Uterus (tissue), 4 donors: ENCODE measurements at regions of chr18 and their contacts with region 1.

Region 1: DNA sequence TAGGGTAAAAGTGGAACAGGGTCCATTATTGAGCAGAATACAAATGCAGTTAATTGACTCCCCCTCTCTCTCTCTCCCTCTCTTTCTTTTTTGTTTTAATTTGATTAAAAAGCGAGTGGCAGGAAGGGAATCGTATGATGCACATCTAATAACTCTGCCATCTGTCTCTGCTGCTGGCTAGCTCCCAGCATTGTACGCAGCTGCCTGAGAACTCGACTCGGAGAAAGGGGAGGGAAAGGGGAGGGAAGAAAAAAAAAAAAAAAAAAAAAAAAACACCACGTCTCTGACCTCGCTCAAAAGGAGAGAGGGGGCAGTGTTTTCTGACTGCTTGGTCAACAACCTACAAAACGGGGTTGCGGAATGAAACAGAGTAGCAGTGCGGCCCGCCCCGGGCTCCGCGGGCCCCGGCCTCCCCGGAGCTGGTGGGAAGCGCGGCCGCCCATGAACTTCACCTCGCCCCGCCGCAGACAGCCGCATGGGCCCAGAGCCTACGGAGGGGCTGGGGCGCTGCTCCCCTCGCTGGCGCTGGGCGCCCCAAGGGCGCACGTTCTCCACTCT is 265.7 kb downstream of the TCF4 start:
- DNase-seq: peak; percentile 83 to 93
- H3K4me3 ChIP-seq: peak overlapping the region; percentile 52 to 72
- H3K27ac ChIP-seq: peak overlapping the region; percentile 97 to 99
- H3K4me1 ChIP-seq: peaks cover 0 to 13% of the 10 kb centered on the region in 2 donors
- H3K27me3 ChIP-seq: no peaks in the 10 kb centered on the region
- CTCF ChIP-seq: peak in 2 of 4 experiments; percentile 14 to 20
- POLR2A ChIP-seq: peak; percentile 69

Region 2: DNA sequence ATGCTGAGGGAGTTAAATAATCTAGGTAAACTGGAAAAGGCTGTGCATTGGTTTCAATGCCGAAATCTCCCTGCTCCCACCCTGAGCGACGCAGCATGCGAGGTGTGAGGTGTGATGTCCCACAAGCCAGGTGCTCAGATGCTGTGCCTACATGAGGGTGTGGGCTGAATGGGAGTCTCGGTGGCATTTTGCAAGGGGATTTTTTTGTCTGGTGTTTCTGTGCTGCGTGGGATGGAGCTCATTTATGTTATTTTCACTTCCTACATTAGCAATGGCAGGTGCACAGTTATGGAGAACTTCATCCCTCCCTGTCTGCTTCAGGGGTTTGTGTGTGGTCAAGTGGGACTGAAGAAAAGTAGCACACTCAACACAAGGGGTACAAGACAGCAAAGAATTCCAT is 252.8 kb before region 1 on chr18:
- intact Hi-C with region 1: no loop called
- DNase-seq: no peak
- H3K4me3 ChIP-seq: no peak overlapping the region
- H3K27ac ChIP-seq: no peak overlapping the region
- H3K4me1 ChIP-seq: no peaks in the 10 kb centered on the region
- H3K27me3 ChIP-seq: no peaks in the 10 kb centered on the region
- CTCF ChIP-seq: no peak
- POLR2A ChIP-seq: no peak

Region 3: DNA sequence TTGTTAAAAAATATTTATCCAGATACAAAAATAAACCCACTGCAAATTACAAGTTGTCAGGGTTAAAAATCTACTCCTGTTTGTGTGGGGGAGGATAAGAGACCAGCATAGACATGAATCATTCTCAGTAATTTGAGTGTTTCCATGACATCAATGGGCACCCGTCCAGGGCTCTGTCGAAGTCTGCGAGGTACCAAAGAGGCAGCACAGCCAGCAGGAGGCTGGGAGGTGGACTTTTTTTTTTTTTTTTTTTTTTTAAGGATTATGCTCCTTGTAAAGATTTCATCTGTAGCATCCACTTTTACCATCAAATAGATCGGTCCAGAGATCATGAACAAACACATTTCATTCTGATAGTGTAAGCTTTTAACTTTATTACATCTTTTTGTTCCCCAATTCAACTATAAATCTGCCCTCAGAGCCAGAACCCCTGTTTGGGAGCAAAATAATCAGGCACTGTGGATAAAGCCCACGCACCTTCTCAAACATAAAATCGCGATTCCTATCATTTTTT is 83.7 kb after region 1 on chr18:
- intact Hi-C with region 1: loop called (anchors 10 kb)
- DNase-seq: peak; percentile 84 to 89
- H3K4me3 ChIP-seq: peak overlapping the region in 1 of 2 donors; percentile 0
- H3K27ac ChIP-seq: peak overlapping the region; percentile 74 to 75
- H3K4me1 ChIP-seq: no peaks in the 10 kb centered on the region
- H3K27me3 ChIP-seq: peaks cover 0 to 3% of the 10 kb centered on the region in 2 donors
- CTCF ChIP-seq: no peak
- POLR2A ChIP-seq: no peak

Region 4: DNA sequence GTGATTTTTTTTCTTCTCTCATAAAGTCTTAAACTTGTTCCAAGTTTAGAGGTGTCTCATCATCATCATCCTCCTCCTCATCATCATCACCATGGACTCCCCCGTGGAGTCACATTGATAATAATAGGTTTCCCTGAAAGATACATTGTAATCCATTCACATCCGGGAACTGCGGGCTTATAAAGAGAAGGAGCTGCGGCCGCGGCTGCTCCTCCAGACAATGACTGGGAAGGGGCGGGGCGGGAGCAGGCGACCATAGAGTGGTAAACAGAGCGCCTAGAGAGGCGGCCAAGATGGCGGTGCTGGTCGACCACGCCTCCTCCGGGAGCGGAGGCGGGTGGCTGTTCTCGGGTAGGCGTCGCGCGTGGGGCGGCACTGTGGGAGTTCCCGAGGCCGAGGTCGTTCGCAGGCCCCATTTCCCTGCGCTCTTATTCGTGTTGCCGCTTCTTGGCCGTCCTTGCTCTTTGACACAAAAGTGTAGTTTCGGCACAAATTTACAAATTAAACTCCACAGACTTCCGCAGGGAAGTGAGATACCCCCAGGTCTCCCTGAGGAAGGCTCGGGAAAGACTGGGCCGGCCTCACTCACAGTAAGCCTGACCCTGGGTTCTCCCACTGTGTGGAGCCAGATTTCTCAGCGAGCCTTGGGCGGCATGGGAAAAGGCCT is 267.5 kb after region 1 on chr18:
- intact Hi-C with region 1: loop called (anchors 5 kb)
- DNase-seq: peak; percentile 97 to 98
- H3K4me3 ChIP-seq: peak overlapping the region; percentile 74 to 79
- H3K27ac ChIP-seq: peak overlapping the region; percentile 88 to 99
- H3K4me1 ChIP-seq: no peaks in the 10 kb centered on the region
- H3K27me3 ChIP-seq: no peaks in the 10 kb centered on the region
- CTCF ChIP-seq: peak in 2 of 4 experiments; percentile 13 to 25
- POLR2A ChIP-seq: peak; percentile 44 to 69